ENCODE measurements at regions of chr7 and their contacts with region 1.

Region 1: GRCh38 chr7:104983578-104984539 is 30.1 kb upstream of the KMT2E start:
- DNase-seq: peak; percentile 91
- H3K4me3 Mint-ChIP-seq: peak overlapping the region; percentile 94
- H3K27ac Mint-ChIP-seq: peak overlapping the region; percentile 100
- H3K4me1 Mint-ChIP-seq: peaks cover 25% of the 10 kb centered on the region
- H3K27me3 Mint-ChIP-seq: no peaks in the 10 kb centered on the region
- CTCF ChIP-seq: peak; percentile 45

Region 2: GRCh38 chr7:104891949-104892348 is 91.9 kb before region 1 on chr7:
- CTCF ChIA-PET with region 1: no interaction called
- POLR2A ChIA-PET with region 1: no interaction called
- intact Hi-C with region 1: no loop called
- DNase-seq: no peak
- H3K4me3 Mint-ChIP-seq: no peak overlapping the region
- H3K27ac Mint-ChIP-seq: no peak overlapping the region
- H3K4me1 Mint-ChIP-seq: no peaks in the 10 kb centered on the region
- H3K27me3 Mint-ChIP-seq: peaks cover 8% of the 10 kb centered on the region
- CTCF ChIP-seq: no peak

Region 3: DNA sequence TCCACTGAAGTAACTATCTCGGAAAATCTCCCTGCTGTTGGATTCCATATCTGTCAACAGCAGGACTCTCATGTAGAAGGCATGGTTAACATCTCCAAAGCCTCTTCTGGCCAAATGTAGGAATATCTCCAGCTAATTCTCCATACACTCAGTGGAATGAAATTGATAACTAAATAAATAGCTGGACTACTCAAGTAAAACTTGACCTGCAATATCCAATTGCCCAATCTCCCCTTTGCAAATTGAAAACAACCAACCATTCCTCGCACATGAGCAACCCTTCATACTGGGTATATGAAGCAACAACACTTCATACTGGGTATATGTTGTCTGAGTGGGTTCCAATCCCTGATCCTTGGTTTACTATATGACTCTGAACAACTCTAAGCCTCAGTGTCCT is 75.2 kb before region 1 on chr7:
- CTCF ChIA-PET with region 1: no interaction called
- POLR2A ChIA-PET with region 1: no interaction called
- intact Hi-C with region 1: no loop called
- DNase-seq: no peak
- H3K4me3 Mint-ChIP-seq: no peak overlapping the region
- H3K27ac Mint-ChIP-seq: no peak overlapping the region
- H3K4me1 Mint-ChIP-seq: no peaks in the 10 kb centered on the region
- H3K27me3 Mint-ChIP-seq: peaks cover 54% of the 10 kb centered on the region
- CTCF ChIP-seq: no peak

Region 4: GRCh38 chr7:104960741-104961448 is 23.0 kb before region 1 on chr7:
- CTCF ChIA-PET with region 1: interaction called, 28 read pairs
- POLR2A ChIA-PET with region 1: interaction called, 87 read pairs
- intact Hi-C with region 1: no loop called
- DNase-seq: peak; percentile 62
- H3K4me3 Mint-ChIP-seq: no peak overlapping the region
- H3K27ac Mint-ChIP-seq: no peak overlapping the region
- H3K4me1 Mint-ChIP-seq: peaks cover 17% of the 10 kb centered on the region
- H3K27me3 Mint-ChIP-seq: no peaks in the 10 kb centered on the region
- CTCF ChIP-seq: no peak

Region 5: DNA sequence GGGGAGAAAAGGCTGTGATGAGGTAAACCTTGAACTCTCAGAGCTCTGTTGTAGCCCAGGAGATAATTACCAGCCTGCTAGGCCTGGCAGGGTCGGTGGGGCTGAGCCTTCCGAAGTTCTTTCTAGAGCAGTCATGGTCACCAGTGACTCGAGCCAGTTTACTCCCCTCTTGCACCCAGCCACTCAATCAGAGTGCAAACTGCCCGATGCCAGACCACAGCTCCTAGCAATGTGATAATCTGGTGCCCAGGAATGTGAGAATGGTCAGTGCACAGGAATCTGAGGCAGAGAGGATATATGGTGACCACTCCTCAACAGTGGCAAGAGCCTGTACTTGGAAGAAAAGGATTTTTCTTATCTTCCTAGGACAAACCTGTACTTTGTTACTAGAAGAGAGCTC is 16.3 kb before region 1 on chr7:
- CTCF ChIA-PET with region 1: interaction called, 28 read pairs
- POLR2A ChIA-PET with region 1: interaction called, 87 read pairs
- intact Hi-C with region 1: no loop called
- DNase-seq: no peak
- H3K4me3 Mint-ChIP-seq: no peak overlapping the region
- H3K27ac Mint-ChIP-seq: no peak overlapping the region
- H3K4me1 Mint-ChIP-seq: peaks cover 24% of the 10 kb centered on the region
- H3K27me3 Mint-ChIP-seq: no peaks in the 10 kb centered on the region
- CTCF ChIP-seq: no peak

Region 6: DNA sequence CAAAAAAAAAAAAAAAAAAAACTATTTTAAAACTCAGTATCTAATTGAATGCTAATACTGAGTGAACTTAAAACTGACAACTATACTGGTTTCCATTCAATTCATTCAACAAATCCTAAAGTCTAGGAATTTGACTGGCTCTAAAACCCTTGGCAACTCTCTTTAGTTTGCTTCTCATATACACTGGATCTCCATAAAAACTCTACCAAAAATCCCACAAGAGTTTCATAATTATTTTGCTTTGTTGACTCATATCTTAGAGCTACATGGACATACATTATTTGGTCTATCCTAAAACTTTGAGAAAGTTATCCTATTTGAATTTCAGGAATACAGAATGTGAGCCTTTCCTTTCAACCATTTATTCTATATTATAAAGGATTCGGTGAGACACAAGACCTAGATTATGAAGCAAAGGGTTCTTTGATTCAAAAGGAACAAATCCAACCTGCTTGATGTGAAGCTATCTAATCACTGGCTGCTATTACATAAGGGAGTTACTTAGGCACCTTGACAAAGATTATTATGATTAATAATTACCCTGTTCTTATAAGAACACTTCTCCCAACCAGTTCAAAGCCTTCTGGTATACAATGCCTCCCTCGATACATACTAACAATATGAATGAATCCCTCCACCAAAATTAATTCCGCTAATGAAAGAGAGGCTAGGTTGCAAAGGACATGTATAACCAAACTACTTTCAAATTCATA is 14.3 kb after region 1 on chr7:
- CTCF ChIA-PET with region 1: interaction called, 119 read pairs
- POLR2A ChIA-PET with region 1: interaction called, 620 read pairs
- intact Hi-C with region 1: loop called (anchors 2 kb)
- DNase-seq: no peak
- H3K4me3 Mint-ChIP-seq: no peak overlapping the region
- H3K27ac Mint-ChIP-seq: peak overlapping the region; percentile 35
- H3K4me1 Mint-ChIP-seq: peaks cover 31% of the 10 kb centered on the region
- H3K27me3 Mint-ChIP-seq: no peaks in the 10 kb centered on the region
- CTCF ChIP-seq: no peak

Region 7: GRCh38 chr7:105003275-105003674 is 19.4 kb after region 1 on chr7:
- CTCF ChIA-PET with region 1: interaction called, 119 read pairs
- POLR2A ChIA-PET with region 1: interaction called, 620 read pairs
- intact Hi-C with region 1: loop called (anchors 2 kb)
- DNase-seq: peak; percentile 81
- H3K4me3 Mint-ChIP-seq: peak overlapping the region; percentile 61
- H3K27ac Mint-ChIP-seq: peak overlapping the region; percentile 47
- H3K4me1 Mint-ChIP-seq: peaks cover 37% of the 10 kb centered on the region
- H3K27me3 Mint-ChIP-seq: no peaks in the 10 kb centered on the region
- CTCF ChIP-seq: no peak

Region 8: GRCh38 chr7:105036217-105037168 is 52.6 kb after region 1 on chr7:
- CTCF ChIA-PET with region 1: interaction called, 17 read pairs
- POLR2A ChIA-PET with region 1: no interaction called
- intact Hi-C with region 1: no loop called
- DNase-seq: no peak
- H3K4me3 Mint-ChIP-seq: no peak overlapping the region
- H3K27ac Mint-ChIP-seq: no peak overlapping the region
- H3K4me1 Mint-ChIP-seq: peaks cover 4% of the 10 kb centered on the region
- H3K27me3 Mint-ChIP-seq: no peaks in the 10 kb centered on the region
- CTCF ChIP-seq: no peak

Region 9: DNA sequence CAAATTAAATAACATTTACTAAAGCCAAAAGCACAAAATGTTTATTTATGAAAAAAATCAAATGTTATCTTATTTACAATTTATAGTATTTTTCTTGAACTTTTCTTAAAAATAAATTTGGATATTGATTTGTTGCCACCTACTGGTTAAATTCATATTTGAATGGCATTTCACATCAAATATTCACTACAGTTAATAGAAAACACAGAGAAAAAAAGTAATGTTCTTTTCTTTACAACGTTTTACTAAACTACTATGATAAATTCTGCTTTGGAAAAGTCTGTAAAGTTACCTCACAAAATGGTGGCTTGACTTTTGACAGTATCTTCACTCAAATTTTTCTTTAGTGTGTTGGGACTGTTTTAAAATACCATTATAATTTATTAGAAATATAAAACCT is 352.1 kb after region 1 on chr7:
- CTCF ChIA-PET with region 1: no interaction called
- POLR2A ChIA-PET with region 1: interaction called, 3 read pairs
- intact Hi-C with region 1: loop called (anchors 5 kb)
- DNase-seq: no peak
- H3K4me3 Mint-ChIP-seq: no peak overlapping the region
- H3K27ac Mint-ChIP-seq: no peak overlapping the region
- H3K4me1 Mint-ChIP-seq: peaks cover 16% of the 10 kb centered on the region
- H3K27me3 Mint-ChIP-seq: no peaks in the 10 kb centered on the region
- CTCF ChIP-seq: peak; percentile 30

Region 10: GRCh38 chr7:106563466-106564150 is 1579.7 kb after region 1 on chr7:
- CTCF ChIA-PET with region 1: no interaction called
- POLR2A ChIA-PET with region 1: no interaction called
- intact Hi-C with region 1: no loop called
- DNase-seq: peak; percentile 75
- H3K4me3 Mint-ChIP-seq: no peak overlapping the region
- H3K27ac Mint-ChIP-seq: no peak overlapping the region
- H3K4me1 Mint-ChIP-seq: peaks cover 21% of the 10 kb centered on the region
- H3K27me3 Mint-ChIP-seq: no peaks in the 10 kb centered on the region
- CTCF ChIP-seq: no peak